KBM-7 (cell line): ENCODE measurements at regions of chr14 and their contacts with region 1.

Region 1: GRCh38 chr14:59428581-59429012 is 36.6 kb downstream of the GPR135 start:
- DNase-seq: no peak

Region 2: GRCh38 chr14:59126710-59127432 is 301.7 kb before region 1 on chr14:
- in situ Hi-C with region 1: loop called (anchors 25 kb)
- DNase-seq: peak; percentile 67